Activated CD8-positive, alpha-beta T cell treated with anti-CD3 and anti-CD28 coated beads, Interleukin-2, amount 10 ng/mL, durations not matched to agents 7 days and 5 days (primary cell): ENCODE measurements at regions of chr4 and their contacts with region 1.

Region 1: DNA sequence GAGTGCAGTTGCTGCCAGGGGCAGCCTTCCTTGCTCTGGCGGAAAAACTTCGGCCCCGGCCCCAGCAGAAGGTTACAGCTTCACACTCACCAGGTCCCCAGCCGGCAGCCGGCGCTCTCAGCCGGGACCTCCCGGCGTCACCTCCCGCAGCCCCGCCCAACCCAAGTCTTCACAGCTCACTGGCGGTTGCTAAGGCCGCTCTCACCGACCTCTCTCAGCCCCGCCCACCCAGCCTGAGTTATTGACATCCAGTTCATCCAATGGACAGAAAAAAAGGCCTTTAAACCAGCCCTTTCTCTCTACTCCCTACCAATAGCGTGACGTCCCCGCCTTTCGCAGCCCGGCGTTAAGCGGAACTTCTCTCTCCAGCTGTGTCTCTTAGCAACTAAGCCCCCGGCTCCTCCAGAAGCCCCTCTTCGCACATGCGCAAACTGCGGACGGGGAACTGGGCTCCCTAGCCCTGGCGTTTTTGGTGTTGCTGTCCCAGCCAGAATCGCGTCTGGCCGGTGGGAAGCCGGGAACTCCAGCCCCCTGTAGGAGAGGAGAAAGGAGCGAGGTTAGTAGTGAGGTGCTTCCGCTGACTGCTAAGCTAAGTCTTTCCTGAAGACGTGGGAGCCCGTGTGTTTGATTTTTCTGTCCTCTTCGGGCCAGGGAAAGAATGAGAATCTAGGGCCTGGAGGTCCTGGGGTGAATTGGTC is at the start of gene BBS12:
- DNase-seq: peak; percentile 99
- ATAC-seq: peak; percentile 99
- H3K4me3 Mint-ChIP-seq: peak within 1 kb of the TSS; percentile 93
- H3K27ac Mint-ChIP-seq: peak within 1 kb of the TSS; percentile 88
- H3K4me1 Mint-ChIP-seq: peaks cover 13% of the 10 kb centered on the region
- H3K27me3 Mint-ChIP-seq: no peaks in the 10 kb centered on the region
- total RNA-seq, gene BBS12: 1.3 to 1.4 TPM

Region 2: DNA sequence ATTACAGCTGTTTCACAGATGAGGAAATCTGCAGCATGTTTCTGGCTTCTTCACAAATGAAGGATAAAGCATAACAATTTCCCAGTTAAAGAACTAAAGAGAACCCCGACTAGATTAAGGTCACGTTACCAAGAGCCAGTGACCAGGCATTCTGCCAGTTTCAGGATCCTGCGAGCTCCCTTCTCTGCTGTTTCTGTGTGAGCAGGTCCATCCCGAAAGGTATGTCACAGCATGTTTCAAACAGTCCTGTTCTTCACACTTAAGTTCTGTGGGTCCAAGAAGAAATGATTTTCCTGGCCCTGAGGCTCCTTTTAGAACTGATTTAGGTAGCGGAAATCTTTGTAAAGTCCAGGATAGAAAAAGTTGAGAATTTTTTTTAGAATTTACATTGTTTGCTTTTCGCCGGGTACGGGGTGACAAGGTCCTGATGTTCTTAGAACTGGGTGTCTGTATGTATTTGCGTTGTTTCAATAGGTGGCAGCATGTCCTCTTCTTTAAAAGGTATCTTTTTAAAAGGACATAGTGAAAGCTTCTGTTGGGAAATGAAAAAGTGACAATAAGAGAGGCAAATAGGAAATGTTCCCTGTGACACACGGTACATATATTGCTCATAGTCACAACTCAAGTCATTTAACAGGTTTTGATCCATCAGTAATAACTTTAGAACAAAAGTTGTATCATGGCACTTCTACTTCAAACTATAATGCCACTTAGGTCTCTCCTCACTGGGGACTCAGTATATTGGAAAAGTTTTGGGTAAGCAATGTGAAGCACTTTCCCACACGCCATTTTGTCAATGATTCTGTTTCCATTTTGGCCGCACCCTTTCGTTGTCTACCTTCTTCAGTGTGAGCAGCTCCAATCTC is 130.0 kb before region 1 on chr4:
- CTCF ChIA-PET with region 1: interaction called, 17 read pairs
- POLR2A ChIA-PET with region 1: no interaction called
- DNase-seq: no peak
- ATAC-seq: peak; percentile 60
- H3K4me3 Mint-ChIP-seq: no peak overlapping the region
- H3K27ac Mint-ChIP-seq: no peak overlapping the region
- H3K4me1 Mint-ChIP-seq: peaks cover 4% of the 10 kb centered on the region
- H3K27me3 Mint-ChIP-seq: peaks cover 26% of the 10 kb centered on the region

Region 3: GRCh38 chr4:122716825-122717448 is 15.5 kb before region 1 on chr4:
- CTCF ChIA-PET with region 1: interaction called, 38 read pairs
- POLR2A ChIA-PET with region 1: no interaction called
- DNase-seq: peak; percentile 79
- ATAC-seq: peak; percentile 96
- H3K4me3 Mint-ChIP-seq: no peak overlapping the region
- H3K27ac Mint-ChIP-seq: no peak overlapping the region
- H3K4me1 Mint-ChIP-seq: peaks cover 18% of the 10 kb centered on the region
- H3K27me3 Mint-ChIP-seq: peaks cover 3% of the 10 kb centered on the region

Region 4: GRCh38 chr4:122747883-122748282 is 15.4 kb after region 1 on chr4:
- CTCF ChIA-PET with region 1: interaction called, 12 read pairs
- POLR2A ChIA-PET with region 1: no interaction called
- DNase-seq: no peak
- ATAC-seq: no peak
- H3K4me3 Mint-ChIP-seq: no peak overlapping the region
- H3K27ac Mint-ChIP-seq: no peak overlapping the region
- H3K4me1 Mint-ChIP-seq: peaks cover 12% of the 10 kb centered on the region
- H3K27me3 Mint-ChIP-seq: peaks cover 18% of the 10 kb centered on the region

Region 5: DNA sequence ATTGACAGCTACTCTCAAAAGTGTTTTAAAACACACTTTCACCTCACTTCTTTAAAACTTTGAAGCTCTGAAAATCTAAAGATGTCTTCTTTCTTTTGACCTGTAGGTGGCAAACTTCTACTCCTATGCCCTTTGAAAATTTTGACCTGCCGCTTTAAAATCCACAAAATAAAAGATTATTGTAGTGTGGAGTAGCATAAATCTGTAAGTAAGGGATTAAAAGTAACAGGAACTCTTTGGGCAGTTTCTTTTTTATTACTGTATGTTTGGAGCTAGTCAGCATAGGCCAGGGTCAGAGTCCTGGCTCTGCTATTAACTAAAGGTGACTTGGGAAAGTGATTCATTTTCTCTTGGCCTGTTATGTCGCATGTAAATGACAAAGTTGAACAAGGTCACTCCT is 25.6 kb after region 1 on chr4:
- CTCF ChIA-PET with region 1: interaction called, 13 read pairs
- POLR2A ChIA-PET with region 1: no interaction called
- DNase-seq: no peak
- ATAC-seq: no peak
- H3K4me3 Mint-ChIP-seq: no peak overlapping the region
- H3K27ac Mint-ChIP-seq: no peak overlapping the region
- H3K4me1 Mint-ChIP-seq: peaks cover 23% of the 10 kb centered on the region
- H3K27me3 Mint-ChIP-seq: peaks cover 14% of the 10 kb centered on the region

Region 6: GRCh38 chr4:122922877-122923511 is 190.5 kb after region 1 on chr4:
- CTCF ChIA-PET with region 1: interaction called, 15 read pairs
- POLR2A ChIA-PET with region 1: interaction called, 5 read pairs
- DNase-seq: peak; percentile 95
- ATAC-seq: peak; percentile 97
- H3K4me3 Mint-ChIP-seq: no peak overlapping the region
- H3K27ac Mint-ChIP-seq: peak overlapping the region; percentile 98
- H3K4me1 Mint-ChIP-seq: peaks cover 16% of the 10 kb centered on the region
- H3K27me3 Mint-ChIP-seq: no peaks in the 10 kb centered on the region

Region 7: DNA sequence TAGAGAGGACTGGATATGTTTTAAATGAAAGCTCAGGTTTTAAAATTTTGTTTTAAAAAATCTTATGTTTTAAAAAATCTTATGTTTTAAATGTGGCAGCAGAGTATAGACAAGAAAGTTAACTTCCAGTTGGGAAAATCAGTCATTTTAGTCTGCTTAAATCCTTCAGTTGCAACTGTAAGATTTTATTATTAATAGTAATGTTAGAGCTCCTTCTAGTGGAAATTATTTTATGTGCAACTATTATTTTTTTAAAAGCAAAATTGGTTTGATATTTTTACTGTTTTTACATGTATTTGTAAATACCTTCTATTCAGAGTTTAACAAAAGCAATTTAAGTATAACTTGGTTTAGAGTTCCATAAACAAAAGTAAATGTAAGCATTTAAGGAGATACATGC is 198.4 kb after region 1 on chr4:
- CTCF ChIA-PET with region 1: interaction called, 18 read pairs
- POLR2A ChIA-PET with region 1: no interaction called
- DNase-seq: no peak
- ATAC-seq: no peak
- H3K4me3 Mint-ChIP-seq: no peak overlapping the region
- H3K27ac Mint-ChIP-seq: no peak overlapping the region
- H3K4me1 Mint-ChIP-seq: peaks cover 26% of the 10 kb centered on the region
- H3K27me3 Mint-ChIP-seq: no peaks in the 10 kb centered on the region

Region 8: GRCh38 chr4:123350191-123350544 is 617.7 kb after region 1 on chr4:
- CTCF ChIA-PET with region 1: no interaction called
- POLR2A ChIA-PET with region 1: no interaction called
- DNase-seq: peak; percentile 32
- ATAC-seq: peak; percentile 49
- H3K4me3 Mint-ChIP-seq: no peak overlapping the region
- H3K27ac Mint-ChIP-seq: no peak overlapping the region
- H3K4me1 Mint-ChIP-seq: peaks cover 19% of the 10 kb centered on the region
- H3K27me3 Mint-ChIP-seq: peaks cover 5% of the 10 kb centered on the region